Activated CD4-positive, alpha-beta T cell treated with anti-CD3 and anti-CD28 coated beads, Interleukin-2, amount 10 ng/mL, durations not matched to agents 24 days and 14 days (primary cell): ENCODE measurements at regions of chr10 and their contacts with region 1.

Region 1: GRCh38 chr10:27155066-27155754 is at the start of gene MASTL:
- DNase-seq: peak; percentile 99
- H3K4me3 Mint-ChIP-seq: peak within 1 kb of the TSS; percentile 92
- H3K27ac Mint-ChIP-seq: peak within 1 kb of the TSS; percentile 100
- H3K4me1 Mint-ChIP-seq: peaks cover 34% of the 10 kb centered on the region
- H3K27me3 Mint-ChIP-seq: no peaks in the 10 kb centered on the region
- total RNA-seq, gene MASTL: 34.0 and 34.5 TPM in 2 replicates

Region 2: GRCh38 chr10:26697163-26697921 is 457.9 kb before region 1 on chr10 and contains the start of gene PDSS1:
- intact Hi-C with region 1: loop called (anchors 2 kb)
- DNase-seq: peak; percentile 92
- H3K4me3 Mint-ChIP-seq: peak within 1 kb of the TSS; percentile 99
- H3K27ac Mint-ChIP-seq: peak within 1 kb of the TSS; percentile 97
- H3K4me1 Mint-ChIP-seq: peaks cover 31% of the 10 kb centered on the region
- H3K27me3 Mint-ChIP-seq: no peaks in the 10 kb centered on the region
- total RNA-seq, gene PDSS1: 39.0 and 39.8 TPM in 2 replicates

Region 3: GRCh38 chr10:27019827-27020226 is 135.4 kb before region 1 on chr10:
- intact Hi-C with region 1: loop called (anchors 5 kb)
- DNase-seq: no peak
- H3K4me3 Mint-ChIP-seq: no peak overlapping the region
- H3K27ac Mint-ChIP-seq: no peak overlapping the region
- H3K4me1 Mint-ChIP-seq: peaks cover 9% of the 10 kb centered on the region
- H3K27me3 Mint-ChIP-seq: no peaks in the 10 kb centered on the region

Region 4: DNA sequence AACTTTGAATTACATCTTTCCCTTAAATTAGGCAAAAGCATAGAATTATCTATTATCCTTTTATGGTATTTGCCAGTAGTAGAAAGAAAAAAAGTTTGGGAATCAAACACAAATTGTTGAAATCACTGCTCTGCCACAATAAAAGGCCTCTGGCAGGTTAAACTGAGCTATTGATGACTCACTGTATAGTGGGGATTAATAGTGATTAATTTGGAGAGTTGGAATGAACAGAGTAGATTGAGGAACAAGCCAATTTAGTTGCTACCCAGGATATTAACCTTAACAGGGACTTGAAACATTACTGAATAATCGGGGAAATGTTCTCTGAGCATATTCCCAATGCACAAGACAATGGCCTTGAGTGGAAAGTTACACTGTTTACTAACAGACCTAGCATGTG is 33.0 kb after region 1 on chr10:
- intact Hi-C with region 1: no loop called
- DNase-seq: no peak
- H3K4me3 Mint-ChIP-seq: no peak overlapping the region
- H3K27ac Mint-ChIP-seq: no peak overlapping the region
- H3K4me1 Mint-ChIP-seq: no peaks in the 10 kb centered on the region
- H3K27me3 Mint-ChIP-seq: no peaks in the 10 kb centered on the region

Region 5: DNA sequence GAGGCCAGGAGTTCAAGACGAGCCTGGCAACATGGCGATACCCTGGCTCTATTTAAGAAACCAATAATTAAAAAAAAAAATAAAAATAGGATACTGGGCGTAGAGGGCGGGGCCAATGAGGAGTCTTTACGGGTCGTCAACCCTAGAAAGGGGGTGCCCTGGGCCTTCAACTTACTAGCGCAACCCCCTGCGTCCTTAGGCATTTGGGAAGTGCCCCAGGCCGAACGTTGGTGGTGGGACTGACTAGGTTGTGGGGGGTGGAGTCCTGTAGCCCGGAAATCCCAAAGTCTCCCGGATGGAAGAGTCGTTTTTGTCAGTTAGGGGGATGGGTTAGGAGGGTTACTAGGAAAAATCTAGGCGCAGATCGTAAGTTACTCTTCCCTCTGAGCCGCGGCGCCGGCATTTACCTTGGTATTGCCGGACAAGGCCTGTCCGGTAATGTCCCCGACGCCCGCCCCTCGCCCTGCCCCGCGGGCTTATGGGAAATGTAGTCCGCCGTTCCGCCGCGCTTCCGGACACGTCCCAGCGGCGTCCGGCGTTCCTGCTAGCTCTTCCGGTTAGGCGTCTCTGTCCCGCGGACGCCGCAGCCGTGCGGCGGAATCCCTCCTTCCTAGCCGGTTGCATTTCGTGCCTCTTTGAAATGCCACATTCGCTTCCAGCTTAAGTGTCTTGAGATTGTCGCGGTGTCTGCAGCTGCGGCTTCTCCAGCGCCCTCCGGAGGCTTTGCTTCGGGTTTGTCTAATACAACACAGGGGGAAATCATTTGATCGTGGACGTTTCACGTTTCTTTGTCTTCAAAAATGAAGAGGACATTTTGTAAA is 86.7 kb after region 1 on chr10:
- intact Hi-C with region 1: loop called (anchors 1 kb)
- DNase-seq: peak; percentile 97
- H3K4me3 Mint-ChIP-seq: peak overlapping the region; percentile 96
- H3K27ac Mint-ChIP-seq: peak overlapping the region; percentile 99
- H3K4me1 Mint-ChIP-seq: peaks cover 31% of the 10 kb centered on the region
- H3K27me3 Mint-ChIP-seq: no peaks in the 10 kb centered on the region

Region 6: DNA sequence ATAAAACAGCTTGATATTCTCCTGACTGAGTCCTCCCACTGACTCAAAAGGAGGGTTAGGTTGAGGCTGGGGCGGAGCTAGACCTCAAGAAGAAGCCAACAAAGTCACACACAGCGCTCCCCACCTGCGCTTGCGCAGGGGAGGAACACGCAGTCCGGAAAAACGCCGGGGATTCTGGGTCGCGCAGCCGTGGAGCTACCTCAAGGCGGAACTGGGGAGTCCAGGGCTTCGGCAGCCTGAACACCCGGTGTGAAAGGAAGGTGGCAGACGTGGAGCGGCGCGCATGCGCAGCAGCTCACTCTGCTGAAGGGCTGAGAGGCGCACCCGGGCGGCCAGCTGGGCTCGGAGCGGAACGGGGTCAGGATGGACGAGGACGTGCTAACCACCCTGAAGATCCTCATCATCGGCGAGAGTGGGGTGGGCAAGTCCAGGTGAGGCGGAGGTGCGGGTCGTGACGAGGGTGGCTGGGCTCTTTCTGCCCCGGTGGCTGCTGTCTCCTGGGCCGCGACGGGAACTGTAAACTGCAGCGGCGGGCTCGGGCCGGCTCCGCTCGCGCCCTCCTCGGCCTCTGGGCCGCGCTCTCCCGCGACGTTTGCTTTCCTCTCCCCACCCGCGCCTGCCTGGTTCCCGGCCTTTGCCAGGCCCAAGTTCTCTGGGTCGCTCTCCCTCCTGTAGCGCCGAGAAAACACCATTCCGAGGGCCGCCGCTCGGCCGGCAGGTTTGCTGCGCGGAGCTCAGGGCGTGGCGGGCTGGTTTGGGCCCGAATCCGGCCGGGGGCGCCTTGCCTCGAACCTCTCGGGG is 349.0 kb after region 1 on chr10 and contains the start of gene RAB18:
- intact Hi-C with region 1: loop called (anchors 1 kb)
- DNase-seq: peak; percentile 99
- H3K4me3 Mint-ChIP-seq: peak within 1 kb of the TSS; percentile 99
- H3K27ac Mint-ChIP-seq: peak within 1 kb of the TSS; percentile 98
- H3K4me1 Mint-ChIP-seq: peaks cover 44% of the 10 kb centered on the region
- H3K27me3 Mint-ChIP-seq: peaks cover 6% of the 10 kb centered on the region
- total RNA-seq, gene RAB18: 55.4 and 58.3 TPM in 2 replicates

Region 7: GRCh38 chr10:28375399-28376369 is 1220.5 kb after region 1 on chr10:
- intact Hi-C with region 1: no loop called
- DNase-seq: no peak
- H3K4me3 Mint-ChIP-seq: no peak overlapping the region
- H3K27ac Mint-ChIP-seq: no peak overlapping the region
- H3K4me1 Mint-ChIP-seq: peaks cover 15% of the 10 kb centered on the region
- H3K27me3 Mint-ChIP-seq: no peaks in the 10 kb centered on the region